GM13977 (cell line): ENCODE measurements at regions of chr20 and their contacts with region 1.

Region 1: DNA sequence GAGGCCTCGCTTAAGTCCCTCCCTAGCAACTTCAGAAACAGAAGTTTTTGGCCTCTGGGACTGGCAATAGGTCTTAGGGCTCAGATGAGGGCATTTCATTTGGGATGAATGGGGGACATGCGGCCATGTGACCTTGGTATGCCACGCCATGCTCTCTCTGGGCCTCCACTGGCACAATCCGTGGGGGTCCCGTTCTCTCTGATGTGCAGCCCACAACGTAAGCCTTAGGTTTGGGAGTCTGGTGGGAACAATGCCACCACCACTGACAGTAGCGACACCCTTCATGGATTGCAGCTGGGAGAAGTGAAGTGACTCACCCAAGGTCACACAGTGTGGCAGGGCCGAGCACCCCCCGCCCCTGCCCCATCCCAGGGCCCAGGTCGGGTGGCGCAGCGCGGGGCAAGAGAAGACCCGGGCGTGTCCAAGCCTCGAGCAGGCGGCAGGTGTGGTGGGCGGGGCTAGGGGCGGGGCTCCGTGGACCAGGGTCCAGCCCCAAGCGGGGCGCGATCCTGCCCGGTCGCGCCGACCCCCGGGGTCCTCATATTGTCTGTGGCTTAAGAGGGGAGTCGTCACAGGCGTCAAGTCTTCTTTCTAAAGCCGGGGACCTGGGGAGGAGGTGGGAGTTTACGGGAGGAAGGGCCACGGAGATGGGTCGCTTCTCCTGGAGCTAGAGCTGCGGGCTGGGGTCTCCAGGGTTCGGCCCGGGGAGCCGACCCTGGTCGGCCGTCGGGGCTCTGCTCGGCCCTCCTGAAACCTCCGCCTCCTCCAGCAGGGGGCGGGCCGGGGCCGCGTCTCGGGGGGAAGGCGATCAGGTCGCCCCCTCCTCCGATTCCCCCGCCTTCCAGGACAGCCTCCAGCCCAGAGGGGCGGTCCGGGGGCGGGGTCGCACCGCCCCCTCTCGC is 698 bp upstream of the CEBPB start:
- DNase-seq: peak; percentile 95
- CTCF ChIP-seq: peak; percentile 74

Region 2: GRCh38 chr20:49982346-49983122 is 207.4 kb before region 1 on chr20 and contains the start of gene SNAI1:
- in situ Hi-C with region 1: loop called (anchors 25 kb)
- DNase-seq: peak; percentile 99
- CTCF ChIP-seq: peak; percentile 55

Region 3: GRCh38 chr20:50070361-50070760 is 119.6 kb before region 1 on chr20:
- in situ Hi-C with region 1: no loop called
- DNase-seq: no peak
- CTCF ChIP-seq: no peak

Region 4: GRCh38 chr20:50292324-50293243 is 102.7 kb after region 1 on chr20:
- in situ Hi-C with region 1: no loop called
- DNase-seq: no peak
- CTCF ChIP-seq: no peak

Region 5: GRCh38 chr20:50460460-50461267 is 270.7 kb after region 1 on chr20:
- in situ Hi-C with region 1: loop called (anchors 5 kb)
- DNase-seq: peak; percentile 65
- CTCF ChIP-seq: peak; percentile 96

Region 6: DNA sequence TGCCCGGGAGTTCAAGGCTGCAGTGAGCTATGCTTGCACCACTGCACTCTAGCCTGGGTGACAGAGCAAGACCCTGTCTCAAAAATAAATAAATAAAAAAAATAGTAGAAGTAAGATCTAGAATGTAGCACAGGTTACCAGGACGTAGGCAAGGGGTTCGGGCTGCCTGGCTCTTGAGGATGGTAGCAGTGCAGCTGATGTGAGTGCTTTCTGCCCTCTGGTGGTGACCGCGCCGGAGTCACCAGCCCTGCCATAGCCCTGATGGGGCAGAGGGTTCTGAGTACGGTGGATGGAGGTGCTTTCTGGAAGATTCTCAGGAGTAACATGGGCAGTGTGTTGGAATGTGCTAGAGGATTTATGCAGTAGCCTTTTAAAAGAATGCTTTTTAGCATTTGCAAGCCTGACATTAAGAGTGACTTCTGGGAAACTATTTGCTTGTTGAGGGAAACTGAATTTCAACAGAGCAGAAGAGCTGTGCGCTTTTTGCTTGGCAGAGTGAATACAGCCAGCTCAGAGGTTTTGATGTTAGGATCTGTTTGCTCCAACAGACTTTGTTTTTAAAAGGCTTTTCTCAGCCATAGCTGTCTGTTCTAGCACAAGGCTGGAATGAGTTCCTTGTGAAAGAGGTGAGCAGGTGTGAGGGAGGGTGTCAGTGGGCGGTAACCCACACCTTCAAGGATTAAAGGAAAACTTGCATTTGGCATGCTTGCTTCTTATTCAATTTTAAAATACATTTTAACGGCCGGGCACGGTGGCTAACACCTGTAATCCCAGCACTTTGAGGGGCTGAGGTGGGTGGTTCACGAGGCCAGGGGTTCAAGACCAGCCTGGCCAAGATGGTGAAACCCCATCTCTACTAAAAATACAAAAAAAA is 386.2 kb after region 1 on chr20:
- in situ Hi-C with region 1: loop called (anchors 10 kb)
- DNase-seq: no peak
- CTCF ChIP-seq: peak; percentile 71